HepG2 (cell line): ENCODE measurements at regions of chr16 and their contacts with region 1.

Region 1: DNA sequence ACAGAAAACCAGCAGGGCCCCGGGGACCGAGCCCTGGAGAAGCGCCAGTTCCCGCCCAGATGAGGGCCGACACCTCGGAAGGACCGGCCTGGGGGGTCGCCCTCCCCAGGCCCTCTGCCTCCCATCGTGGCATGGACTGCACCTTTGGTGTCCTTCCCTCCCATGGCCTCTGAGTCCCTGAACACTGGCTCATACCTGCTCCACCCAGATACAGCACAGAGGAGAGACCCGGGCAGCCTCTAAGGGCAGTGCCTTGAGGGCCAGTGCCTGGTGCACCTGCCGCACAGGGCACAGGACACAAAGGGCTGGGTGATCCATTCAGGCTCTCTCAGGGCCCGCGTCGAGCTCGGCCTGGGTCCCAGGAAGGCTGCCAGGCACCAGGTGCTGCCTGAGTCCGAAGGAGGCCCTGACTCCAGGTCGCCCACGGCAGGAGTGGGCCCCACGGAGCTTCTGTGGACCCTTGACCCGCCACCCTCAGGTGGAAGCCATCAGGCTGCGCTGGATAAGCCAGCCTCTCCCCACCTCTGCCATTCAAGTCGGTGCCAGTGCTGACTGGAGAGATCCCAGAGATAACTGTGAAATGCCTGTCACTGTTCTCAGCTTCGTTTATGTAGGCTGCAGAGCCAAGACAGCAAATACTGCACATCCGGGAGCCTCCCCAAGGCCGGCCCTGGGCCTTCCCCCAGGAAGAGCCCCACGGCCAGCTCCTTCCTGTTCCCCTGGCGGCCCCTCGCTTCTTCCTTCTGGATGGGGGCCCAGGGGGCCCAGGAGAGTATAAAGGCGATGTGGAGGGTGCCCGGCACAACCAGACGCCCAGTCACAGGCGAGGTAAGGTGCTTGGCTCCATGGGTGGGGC is at the start of gene ZG16B:
- DNase-seq: peak; percentile 51
- ATAC-seq: peak; percentile 60
- H3K4me3 ChIP-seq: peak within 1 kb of the TSS; percentile 46 to 63 (median 57)
- H3K27ac ChIP-seq: no peak within 1 kb of the TSS
- H3K4me1 ChIP-seq: peaks cover 41% of the 10 kb centered on the region
- H3K27me3 ChIP-seq: peaks cover 1 to 68% of the 10 kb centered on the region in 2 experiments
- CTCF ChIP-seq: no peak
- EP300 ChIP-seq: 0 out of 4 replicates have a peak, but pooled peaks of 1 of the 2 experiments have one; percentile 22
- POLR2A ChIP-seq: peak in 1 of 2 experiments; percentile 41; a peak in 1 of 4 replicates
- RAD21 ChIP-seq: no peak
- total RNA-seq, gene ZG16B: 1.5 and 1.8 TPM in 2 replicates

Region 2: GRCh38 chr16:2784951-2785635 is 44.6 kb before region 1 on chr16:
- CTCF ChIA-PET with region 1: no interaction called
- POLR2A ChIA-PET with region 1: no interaction called
- in situ Hi-C with region 1: loop called (anchors 5 kb)
- intact Hi-C with region 1: no loop called
- DNase-seq: no peak
- ATAC-seq: peak; percentile 6; the same call in 1 of the 3 replicates
- H3K4me3 ChIP-seq: peak overlapping the region in 1 of 3 experiments; percentile 19; a peak in 1 of 6 replicates
- H3K27ac ChIP-seq: no peak overlapping the region
- H3K4me1 ChIP-seq: peaks cover 18% of the 10 kb centered on the region
- H3K27me3 ChIP-seq: peaks cover 4 to 65% of the 10 kb centered on the region in 2 experiments; a peak in 4 of 5 replicates
- CTCF ChIP-seq: no peak
- EP300 ChIP-seq: no peak
- POLR2A ChIP-seq: no peak
- RAD21 ChIP-seq: no peak

Region 3: DNA sequence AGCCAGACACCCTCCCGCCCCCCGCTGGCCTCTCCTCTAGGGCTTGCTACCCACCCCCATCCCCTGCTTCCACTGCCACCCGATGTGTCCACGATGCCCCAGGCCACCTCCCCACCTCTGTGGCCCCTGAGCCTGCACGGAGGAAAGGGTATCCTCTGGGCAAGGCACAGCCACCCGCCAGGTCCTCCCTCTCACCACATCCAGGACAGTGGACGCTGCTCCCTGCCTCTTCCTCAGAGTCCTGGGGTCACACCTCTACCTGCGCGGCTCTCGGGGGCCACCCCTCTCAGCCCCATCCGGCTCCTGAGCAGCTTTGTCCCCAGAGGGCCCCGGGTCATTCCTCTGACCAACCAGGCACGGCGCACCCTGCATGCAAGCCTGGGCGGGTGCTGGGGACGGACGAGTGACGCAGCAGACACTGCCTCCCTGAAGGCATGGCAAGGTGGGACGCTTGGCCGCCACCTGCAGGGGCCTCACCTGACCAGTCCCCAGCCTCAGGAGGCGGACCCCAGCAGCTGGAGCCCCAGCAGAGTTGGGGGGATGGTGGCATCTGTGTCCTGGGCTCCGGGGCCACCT is 106.8 kb after region 1 on chr16:
- CTCF ChIA-PET with region 1: no interaction called
- POLR2A ChIA-PET with region 1: no interaction called
- in situ Hi-C with region 1: no loop called
- intact Hi-C with region 1: no loop called
- DNase-seq: no peak
- ATAC-seq: no peak
- H3K4me3 ChIP-seq: no peak overlapping the region
- H3K27ac ChIP-seq: no peak overlapping the region
- H3K4me1 ChIP-seq: no peaks in the 10 kb centered on the region
- H3K27me3 ChIP-seq: no peaks in the 10 kb centered on the region
- CTCF ChIP-seq: no peak
- EP300 ChIP-seq: no peak
- POLR2A ChIP-seq: no peak
- RAD21 ChIP-seq: no peak